Activated naive CD4-positive, alpha-beta T cell treated with anti-CD3 and anti-CD28 coated beads for 36 hours (primary cell): ENCODE measurements at regions of chr1 and their contacts with region 1.

Region 1: GRCh38 chr1:19485362-19486187 is at the start of gene CAPZB:
- DNase-seq: peak; percentile 95
- H3K4me3 Mint-ChIP-seq: peak within 1 kb of the TSS; percentile 96
- H3K27ac Mint-ChIP-seq: peak within 1 kb of the TSS; percentile 97
- H3K4me1 Mint-ChIP-seq: peaks cover 57% of the 10 kb centered on the region
- H3K27me3 Mint-ChIP-seq: no peaks in the 10 kb centered on the region
- total RNA-seq, gene CAPZB: 362 to 381 TPM

Region 2: GRCh38 chr1:19251305-19252196 is 234.0 kb before region 1 on chr1 and contains the starts of genes EMC1 and MRTO4:
- CTCF ChIA-PET with region 1: no interaction called
- intact Hi-C with region 1: loop called (anchors 5 kb)
- DNase-seq: peak; percentile 90
- H3K4me3 Mint-ChIP-seq: peak within 1 kb of the TSS; percentile 85
- H3K27ac Mint-ChIP-seq: peak within 1 kb of the TSS; percentile 90
- H3K4me1 Mint-ChIP-seq: peaks cover 47% of the 10 kb centered on the region
- H3K27me3 Mint-ChIP-seq: no peaks in the 10 kb centered on the region
- total RNA-seq, gene EMC1: 40.2 to 43.2 TPM
- total RNA-seq, gene MRTO4: 53.2 to 54.3 TPM

Region 3: GRCh38 chr1:19448491-19449439 is 36.8 kb before region 1 on chr1:
- CTCF ChIA-PET with region 1: interaction called, 5 read pairs
- intact Hi-C with region 1: loop called (anchors 1 kb)
- DNase-seq: peak; percentile 74
- H3K4me3 Mint-ChIP-seq: peak overlapping the region; percentile 17
- H3K27ac Mint-ChIP-seq: peak overlapping the region; percentile 90
- H3K4me1 Mint-ChIP-seq: peaks cover 91% of the 10 kb centered on the region
- H3K27me3 Mint-ChIP-seq: no peaks in the 10 kb centered on the region

Region 4: DNA sequence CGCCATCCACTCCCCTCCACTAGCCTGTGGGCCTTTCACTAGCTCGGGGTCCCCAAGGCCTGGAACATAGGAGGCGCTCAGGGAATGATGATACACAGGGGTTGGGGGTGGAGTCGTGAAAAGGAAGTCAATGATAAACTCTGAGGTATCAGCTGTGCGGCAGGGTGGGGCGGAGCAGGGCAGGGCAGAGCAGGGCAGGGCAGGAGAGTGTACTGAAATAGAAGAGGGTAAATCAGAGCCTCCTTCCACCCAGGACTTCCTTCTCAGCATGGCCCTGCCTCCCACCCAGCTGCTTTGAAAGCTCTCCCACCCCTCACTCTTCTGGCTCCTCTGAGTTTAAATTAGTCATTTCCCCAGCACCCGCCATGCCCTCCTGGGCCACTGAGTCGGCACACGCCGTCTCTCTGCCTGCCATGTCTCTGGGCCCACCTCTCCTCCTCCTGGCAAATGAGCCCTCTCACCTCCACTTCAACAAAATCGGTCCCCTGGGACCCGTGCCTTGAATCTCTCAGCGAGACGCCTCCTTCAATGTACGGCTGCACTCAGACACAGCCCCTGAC is 17.1 kb before region 1 on chr1:
- CTCF ChIA-PET with region 1: interaction called, 10 read pairs
- intact Hi-C with region 1: loop called (anchors 1 kb)
- DNase-seq: peak; percentile 87
- H3K4me3 Mint-ChIP-seq: peak overlapping the region; percentile 37
- H3K27ac Mint-ChIP-seq: peak overlapping the region; percentile 88
- H3K4me1 Mint-ChIP-seq: peaks cover 89% of the 10 kb centered on the region
- H3K27me3 Mint-ChIP-seq: no peaks in the 10 kb centered on the region

Region 5: DNA sequence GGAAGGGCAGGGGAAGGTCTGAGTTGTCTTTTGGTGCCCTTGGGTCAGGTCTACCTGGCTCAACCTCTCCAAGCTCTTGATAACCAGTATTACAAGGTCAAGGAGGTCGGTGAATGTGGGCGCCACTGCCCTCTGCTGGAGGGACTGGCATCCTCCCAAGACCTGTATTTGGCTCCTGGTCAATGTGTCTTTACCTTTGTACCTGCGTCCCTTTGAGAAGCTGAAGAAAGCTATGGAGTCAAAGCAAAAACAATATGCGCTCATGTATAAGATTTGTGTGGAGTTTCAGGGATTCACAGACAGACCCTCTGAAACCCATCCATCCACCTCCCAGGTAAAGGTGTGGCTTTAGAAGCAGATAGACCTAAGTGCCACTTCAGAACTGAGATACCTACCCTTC is 96.7 kb after region 1 on chr1:
- CTCF ChIA-PET with region 1: interaction called, 9 read pairs
- intact Hi-C with region 1: loop called (anchors 1 kb)
- DNase-seq: peak; percentile 89
- H3K4me3 Mint-ChIP-seq: no peak overlapping the region
- H3K27ac Mint-ChIP-seq: no peak overlapping the region
- H3K4me1 Mint-ChIP-seq: peaks cover 11% of the 10 kb centered on the region
- H3K27me3 Mint-ChIP-seq: no peaks in the 10 kb centered on the region